GM12878 (cell line): ENCODE measurements at regions of chr13 and their contacts with region 1.

Region 1: GRCh38 chr13:77460195-77460594 is 75.3 kb upstream of the SCEL start:
- DNase-seq: peak; percentile 26
- ATAC-seq: peak; percentile 99
- H3K4me3 ChIP-seq: no peak overlapping the region
- H3K27ac ChIP-seq: no peak overlapping the region
- H3K4me1 ChIP-seq: peaks cover 3% of the 10 kb centered on the region; the same call in 1 of the 2 replicates
- H3K27me3 ChIP-seq: no peaks in the 10 kb centered on the region
- CTCF ChIP-seq: no peak
- EP300 ChIP-seq: no peak
- POLR2A ChIP-seq: no peak
- RAD21 ChIP-seq: no peak

Region 2: DNA sequence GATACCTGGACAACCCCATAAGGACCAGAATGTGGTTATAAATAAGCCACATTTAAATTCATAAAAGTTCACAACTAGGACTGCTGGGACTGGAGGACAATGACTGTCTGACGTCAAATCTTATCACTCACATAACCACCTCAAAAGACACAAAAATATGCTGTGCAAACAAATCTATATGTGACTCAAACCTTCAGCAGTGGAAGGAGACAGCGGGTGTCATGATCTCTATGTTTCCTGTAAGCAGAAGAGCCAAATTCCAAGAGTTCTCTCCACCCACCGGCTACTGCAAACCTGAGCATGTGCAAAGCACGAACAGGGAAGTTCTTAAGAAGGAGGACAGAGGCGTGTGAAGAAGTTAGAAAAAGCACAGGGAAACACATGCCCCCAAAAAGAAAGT is 246.6 kb before region 1 on chr13:
- CTCF ChIA-PET with region 1: no interaction called
- POLR2A ChIA-PET with region 1: no interaction called
- RAD21 ChIA-PET with region 1: no interaction called
- SMC1A ChIA-PET with region 1: no interaction called
- in situ Hi-C with region 1: no loop called
- intact Hi-C with region 1: no loop called
- DNase-seq: no peak
- ATAC-seq: no peak
- H3K4me3 ChIP-seq: no peak overlapping the region
- H3K27ac ChIP-seq: no peak overlapping the region
- H3K4me1 ChIP-seq: no peaks in the 10 kb centered on the region
- H3K27me3 ChIP-seq: no peaks in the 10 kb centered on the region
- CTCF ChIP-seq: no peak
- EP300 ChIP-seq: no peak
- POLR2A ChIP-seq: no peak
- RAD21 ChIP-seq: no peak

Region 3: DNA sequence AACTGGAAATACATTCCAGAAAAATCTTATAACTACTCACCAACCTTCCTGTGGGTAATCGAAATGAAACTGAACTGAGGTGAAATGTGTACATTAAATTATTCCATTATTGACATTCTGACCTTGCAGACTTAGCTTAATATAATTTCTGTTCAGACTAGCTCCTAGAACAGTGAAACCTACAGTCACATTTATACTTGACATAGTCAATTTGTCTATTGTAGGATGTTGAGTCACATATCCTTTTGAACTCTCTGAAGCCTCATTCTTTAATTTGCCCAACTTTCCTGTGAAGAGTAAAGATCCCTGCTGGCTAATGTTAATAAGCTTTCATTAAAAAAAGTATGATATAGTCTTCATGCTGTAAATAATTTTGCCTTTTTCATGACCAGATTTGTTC is 16.7 kb before region 1 on chr13:
- CTCF ChIA-PET with region 1: interaction called, 3 read pairs
- POLR2A ChIA-PET with region 1: interaction called, 6 read pairs
- RAD21 ChIA-PET with region 1: no interaction called
- SMC1A ChIA-PET with region 1: interaction called, 13 read pairs
- in situ Hi-C with region 1: no loop called
- intact Hi-C with region 1: no loop called
- DNase-seq: no peak
- ATAC-seq: no peak
- H3K4me3 ChIP-seq: no peak overlapping the region
- H3K27ac ChIP-seq: no peak overlapping the region
- H3K4me1 ChIP-seq: no peaks in the 10 kb centered on the region; the same call in 1 of the 2 replicates
- H3K27me3 ChIP-seq: no peaks in the 10 kb centered on the region
- CTCF ChIP-seq: no peak
- EP300 ChIP-seq: no peak
- POLR2A ChIP-seq: no peak
- RAD21 ChIP-seq: no peak

Region 4: GRCh38 chr13:77506874-77507273 is 46.7 kb after region 1 on chr13:
- CTCF ChIA-PET with region 1: no interaction called
- POLR2A ChIA-PET with region 1: no interaction called
- RAD21 ChIA-PET with region 1: no interaction called
- SMC1A ChIA-PET with region 1: no interaction called
- in situ Hi-C with region 1: no loop called
- intact Hi-C with region 1: no loop called
- DNase-seq: no peak
- ATAC-seq: no peak
- H3K4me3 ChIP-seq: no peak overlapping the region
- H3K27ac ChIP-seq: no peak overlapping the region
- H3K4me1 ChIP-seq: peaks cover 17% of the 10 kb centered on the region
- H3K27me3 ChIP-seq: no peaks in the 10 kb centered on the region
- CTCF ChIP-seq: peak; percentile 16 to 32 (median 22); a peak in 3 of 6 replicates
- EP300 ChIP-seq: no peak
- POLR2A ChIP-seq: no peak
- RAD21 ChIP-seq: peak; percentile 18; the same call in 1 of the 2 replicates